ENCODE measurements at regions of chr6 and their contacts with region 1.

Region 1: GRCh38 chr6:75601304-75602245 is at the start of gene SENP6:
- DNase-seq: peak; percentile 46 to 90 (median 80)

Region 2: GRCh38 chr6:75284632-75285286 is 316.8 kb before region 1 on chr6 and contains the start of gene TMEM30A:
- intact Hi-C with region 1: loop called (anchors 10 kb)
- DNase-seq: peak; percentile 94 to 99 (median 98)

Region 3: DNA sequence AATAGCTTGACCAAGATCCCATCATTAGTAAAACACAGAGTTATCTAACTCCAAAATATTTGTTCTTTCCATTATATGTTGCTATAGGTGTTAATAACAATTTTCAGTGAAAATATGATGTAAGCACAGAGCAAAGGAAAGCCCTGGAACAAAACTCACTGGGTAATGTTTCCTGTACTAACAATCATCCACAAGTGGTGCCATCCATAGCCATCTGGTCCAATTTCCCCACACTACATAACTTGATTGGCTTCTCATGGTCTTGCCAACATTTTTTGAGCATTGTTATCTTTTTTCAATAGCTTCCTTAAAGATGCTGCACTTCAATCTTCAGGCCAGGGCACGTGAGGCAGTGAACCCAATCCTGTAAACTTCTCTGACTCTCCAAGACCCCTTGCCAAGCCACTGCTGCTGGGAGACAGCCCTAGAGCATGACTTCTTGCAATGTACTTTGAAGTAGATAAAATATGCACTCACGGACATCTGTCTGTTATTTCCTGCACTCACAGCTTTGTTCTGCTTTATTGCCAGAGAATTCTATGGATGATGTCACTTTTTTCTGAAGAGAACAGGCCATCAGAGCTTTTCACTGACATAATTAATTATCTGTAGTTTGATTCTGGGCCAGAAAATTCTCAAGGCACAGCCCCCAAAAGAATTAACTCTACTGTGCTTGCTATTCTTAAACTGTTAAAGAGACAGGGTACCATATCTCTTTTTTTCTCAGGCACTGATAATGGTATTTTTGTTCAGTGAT is 219.5 kb before region 1 on chr6:
- intact Hi-C with region 1: no loop called
- DNase-seq: no peak

Region 4: GRCh38 chr6:75748743-75749501 is 147.3 kb after region 1 on chr6 and contains the start of gene MYO6:
- intact Hi-C with region 1: loop called (anchors 10 kb)
- DNase-seq: peak; percentile 38 to 92 (median 84)

Measured in head of caudate nucleus (tissue), 42 donors.